Cardiac septum (tissue), 1 donor: ENCODE measurements at regions of chr12 and their contacts with region 1.

Region 1: DNA sequence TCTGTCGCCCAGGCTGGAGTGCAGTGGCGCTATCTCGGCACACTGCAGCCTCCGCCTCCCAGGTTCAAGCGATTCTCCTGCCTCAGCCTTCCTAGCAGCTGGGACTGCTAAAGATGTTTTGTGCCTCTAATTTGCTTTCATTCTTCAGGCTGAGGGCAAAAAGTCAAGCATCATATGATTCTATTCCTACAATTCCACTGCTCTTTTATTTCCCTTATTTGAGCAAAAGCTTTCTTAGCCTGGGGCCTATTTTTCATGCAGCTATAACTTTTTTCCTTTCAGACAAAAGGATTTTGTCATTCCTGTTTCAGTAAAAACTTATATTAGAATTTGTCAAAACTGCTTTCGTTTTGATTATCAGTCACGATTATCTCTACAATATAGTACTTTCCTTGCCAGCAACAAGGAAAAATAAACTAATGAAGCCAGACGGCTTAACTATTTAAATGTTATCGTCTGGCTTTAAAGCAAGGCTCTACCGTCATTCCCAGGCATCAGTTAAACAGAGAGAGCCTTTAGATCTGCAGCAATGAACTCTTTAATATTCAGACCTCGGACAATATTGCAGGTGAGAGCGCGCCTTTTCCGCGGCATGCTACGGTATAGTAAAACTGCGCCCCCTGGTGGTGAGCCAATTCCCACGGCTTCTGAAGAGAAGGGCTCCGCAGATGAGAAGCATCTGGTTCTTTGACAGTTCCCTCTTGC is 1.4 kb upstream of the SLC2A13 start:
- DNase-seq: peak; percentile 92

Region 2: DNA sequence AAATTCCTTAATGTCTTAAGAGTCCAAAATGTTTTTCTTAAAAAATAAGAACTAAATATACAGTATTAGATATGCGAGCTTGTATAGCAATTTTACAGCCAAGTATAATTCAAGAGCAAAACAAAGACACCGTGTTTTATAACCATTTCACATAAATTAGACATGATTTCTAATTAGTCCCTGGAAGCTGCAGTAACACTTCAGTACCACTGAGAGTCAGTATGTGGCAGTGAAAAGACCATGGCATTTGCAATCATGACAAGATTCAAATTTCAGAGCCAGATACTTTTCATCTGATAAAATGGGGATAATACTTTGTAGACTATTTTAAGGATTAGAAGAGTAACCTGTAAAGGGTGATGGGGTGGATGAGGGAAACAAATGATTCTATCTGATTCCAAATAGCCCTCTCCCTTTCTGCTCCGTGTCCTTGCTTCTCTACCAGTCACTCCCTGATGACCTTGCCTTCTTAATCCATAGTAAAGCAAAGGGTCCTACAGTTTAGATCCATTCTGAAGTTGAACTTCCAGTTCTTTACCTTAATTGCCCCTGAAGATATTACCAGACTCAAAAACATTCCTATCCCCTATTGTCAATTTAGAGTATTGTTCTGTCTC is 342.2 kb before region 1 on chr12:
- intact Hi-C with region 1: loop called (anchors 10 kb)
- DNase-seq: no peak

Region 3: GRCh38 chr12:40010899-40011774 is 96.1 kb before region 1 on chr12:
- intact Hi-C with region 1: loop called (anchors 1 kb)
- DNase-seq: no peak

Region 4: GRCh38 chr12:40054554-40055227 is 52.6 kb before region 1 on chr12:
- intact Hi-C with region 1: loop called (anchors 5 kb)
- DNase-seq: no peak